Mammary epithelial cell (primary cell): ENCODE measurements at regions of chr1 and their contacts with region 1.

Region 1: DNA sequence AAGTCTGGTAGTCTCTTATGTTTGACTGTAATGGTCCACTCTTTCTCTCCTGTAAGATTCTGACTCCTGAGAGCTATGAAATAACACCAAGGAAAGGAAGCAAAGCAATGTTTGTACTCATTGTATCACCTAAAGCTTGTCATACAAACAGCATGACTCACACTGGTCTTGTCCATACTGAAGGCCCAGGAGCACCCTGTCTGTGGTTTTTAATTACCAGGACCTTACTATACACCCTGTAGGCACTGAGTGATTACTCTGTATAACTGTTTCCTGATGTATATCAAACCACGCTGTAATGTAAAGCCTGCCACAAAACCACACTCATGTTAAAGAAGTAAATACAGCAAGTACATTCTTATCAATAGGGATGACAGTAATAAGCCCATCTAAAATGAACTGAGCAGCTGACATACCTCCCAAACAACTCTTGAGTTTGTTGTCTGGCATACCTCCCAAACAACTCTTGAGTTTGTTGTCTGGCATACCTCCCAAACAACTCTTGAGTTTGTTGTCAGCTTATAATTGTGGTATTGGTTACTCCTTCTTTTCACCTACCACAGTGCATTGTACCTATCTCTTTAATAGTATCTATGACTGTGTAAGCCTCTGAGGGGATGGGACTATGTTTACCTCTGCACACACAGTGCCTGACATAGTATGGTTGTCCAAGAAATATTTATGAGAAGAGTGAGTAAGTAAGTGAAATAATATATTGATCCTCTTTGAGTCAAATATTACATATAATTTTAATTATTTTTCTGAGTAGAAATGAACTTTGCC is 11.6 kb upstream of the TNFSF18 start:
- DNase-seq: peak; percentile 93
- H3K4me3 ChIP-seq: no peak overlapping the region
- H3K27ac ChIP-seq: no peak overlapping the region
- H3K4me1 ChIP-seq: peaks cover 23% of the 10 kb centered on the region
- H3K27me3 ChIP-seq: no peaks in the 10 kb centered on the region
- CTCF ChIP-seq: no peak

Region 2: DNA sequence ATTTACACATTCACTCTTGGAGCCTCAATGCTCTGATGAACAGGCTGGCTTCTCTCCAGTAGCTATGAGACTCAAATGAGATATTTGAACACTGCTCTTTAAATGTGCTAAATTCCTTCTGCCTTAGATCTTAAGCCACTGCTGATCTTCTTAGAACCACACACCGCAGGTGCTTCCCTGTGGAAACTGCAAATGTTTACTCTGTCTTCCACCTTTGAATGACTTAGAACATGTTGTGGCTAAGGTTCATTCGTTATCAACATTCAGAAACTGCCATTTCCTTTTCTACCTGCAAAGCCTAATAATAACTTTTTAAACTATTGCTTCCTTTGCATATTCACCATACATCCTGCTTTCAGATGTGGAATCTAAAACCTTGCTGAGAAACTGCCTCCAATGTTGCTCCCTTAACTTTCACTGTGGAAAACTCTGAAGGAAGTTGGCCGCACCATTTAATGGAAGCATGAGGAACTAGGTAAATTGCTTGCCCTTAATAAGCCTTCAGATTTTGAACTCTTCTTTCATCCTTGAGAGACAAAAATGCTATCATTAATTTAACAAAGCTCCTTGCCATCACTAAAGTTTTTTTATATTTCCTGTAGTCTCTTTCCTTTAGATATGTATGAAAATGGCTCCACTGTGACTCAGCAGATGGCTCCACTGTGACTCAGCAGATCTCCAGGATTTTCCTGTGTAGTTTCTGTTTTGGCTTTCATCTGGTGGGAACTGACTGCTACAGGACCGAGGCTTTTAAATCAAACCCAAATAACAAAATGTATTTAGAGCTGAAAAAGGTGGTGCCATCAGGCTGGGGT is 155.4 kb before region 1 on chr1:
- CTCF ChIA-PET with region 1: no interaction called
- dilution Hi-C with region 1: no loop called
- in situ Hi-C with region 1: no loop called
- intact Hi-C with region 1: loop called (anchors 5 kb)
- DNase-seq: peak; percentile 90
- H3K4me3 ChIP-seq: no peak overlapping the region
- H3K27ac ChIP-seq: peak overlapping the region; percentile 71
- H3K4me1 ChIP-seq: peaks cover 64% of the 10 kb centered on the region
- H3K27me3 ChIP-seq: no peaks in the 10 kb centered on the region
- CTCF ChIP-seq: no peak

Region 3: GRCh38 chr1:173009597-173009996 is 52.8 kb before region 1 on chr1:
- CTCF ChIA-PET with region 1: no interaction called
- dilution Hi-C with region 1: no loop called
- in situ Hi-C with region 1: no loop called
- intact Hi-C with region 1: no loop called
- DNase-seq: no peak
- H3K4me3 ChIP-seq: no peak overlapping the region
- H3K27ac ChIP-seq: no peak overlapping the region
- H3K4me1 ChIP-seq: no peaks in the 10 kb centered on the region
- H3K27me3 ChIP-seq: no peaks in the 10 kb centered on the region
- CTCF ChIP-seq: no peak

Region 4: GRCh38 chr1:173095632-173096031 is 33.3 kb after region 1 on chr1:
- CTCF ChIA-PET with region 1: no interaction called
- dilution Hi-C with region 1: no loop called
- in situ Hi-C with region 1: no loop called
- intact Hi-C with region 1: loop called (anchors 5 kb)
- DNase-seq: peak; percentile 83
- H3K4me3 ChIP-seq: no peak overlapping the region
- H3K27ac ChIP-seq: no peak overlapping the region
- H3K4me1 ChIP-seq: peaks cover 17% of the 10 kb centered on the region
- H3K27me3 ChIP-seq: no peaks in the 10 kb centered on the region
- CTCF ChIP-seq: no peak

Region 5: DNA sequence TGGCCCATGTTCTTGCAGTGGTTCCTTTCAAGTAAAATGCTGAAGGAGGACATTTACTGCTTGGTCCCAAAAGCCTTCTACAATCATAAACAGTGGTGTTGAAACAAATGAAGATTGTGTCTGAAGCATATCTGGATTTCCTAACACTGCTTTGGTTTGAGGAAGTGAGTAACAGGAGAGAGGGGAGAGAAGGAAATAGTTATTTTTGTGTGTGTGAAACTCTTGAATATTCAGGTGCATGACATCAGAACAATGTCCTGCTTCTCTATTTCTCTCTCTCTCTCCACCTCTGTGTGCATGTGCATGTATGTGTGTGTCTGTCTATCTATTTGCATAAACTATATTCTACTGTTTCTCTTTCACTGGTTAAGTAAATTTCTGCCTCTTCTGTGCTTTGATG is 49.8 kb after region 1 on chr1:
- CTCF ChIA-PET with region 1: interaction called, 23 read pairs
- dilution Hi-C with region 1: no loop called
- in situ Hi-C with region 1: no loop called
- intact Hi-C with region 1: no loop called
- DNase-seq: peak; percentile 62
- H3K4me3 ChIP-seq: no peak overlapping the region
- H3K27ac ChIP-seq: no peak overlapping the region
- H3K4me1 ChIP-seq: peaks cover 15% of the 10 kb centered on the region
- H3K27me3 ChIP-seq: no peaks in the 10 kb centered on the region
- CTCF ChIP-seq: no peak